GM12878 (cell line): ENCODE measurements at regions of chr17 and their contacts with region 1.

Region 1: DNA sequence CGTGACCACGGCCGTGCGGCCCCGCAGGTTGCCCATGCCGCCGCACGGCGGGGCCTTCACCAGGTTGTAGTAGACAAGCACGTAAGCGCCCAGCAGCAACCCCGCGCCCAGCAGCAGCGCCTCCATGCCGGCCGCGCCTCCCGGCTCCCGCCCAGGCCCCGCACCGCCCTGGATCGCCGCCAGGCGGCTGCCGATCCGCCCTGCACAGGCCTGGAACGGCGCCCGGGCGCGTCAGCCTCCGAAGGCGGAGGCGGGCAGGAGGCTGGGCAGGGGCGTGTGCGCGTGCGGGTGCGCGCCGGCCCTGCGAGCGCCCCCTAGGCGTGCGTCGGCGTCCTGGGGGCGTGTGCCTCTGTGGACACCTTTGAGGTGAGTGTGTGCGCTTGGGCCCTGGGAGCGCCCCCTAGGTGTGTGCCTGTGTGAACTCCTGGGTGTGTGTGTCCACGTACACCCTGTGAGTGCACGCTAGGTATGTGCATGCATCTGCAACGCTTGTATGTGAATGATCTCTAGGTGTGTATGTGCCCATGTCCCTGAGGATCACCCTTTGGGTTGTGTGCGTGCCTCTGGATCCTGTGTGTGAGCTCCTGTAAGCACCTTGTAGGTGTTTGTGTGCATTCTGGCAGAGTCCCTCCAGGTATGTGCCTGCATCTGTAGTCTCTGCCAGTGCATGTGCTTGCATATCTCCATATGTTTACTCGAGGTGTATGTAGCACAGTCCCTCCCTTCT is at the start of gene DHRS13:
- DNase-seq: peak; percentile 81
- ATAC-seq: peak; percentile 91
- H3K4me3 ChIP-seq: peak within 1 kb of the TSS; percentile 82
- H3K27ac ChIP-seq: no peak within 1 kb of the TSS; the same call in 1 of the 2 replicates
- H3K4me1 ChIP-seq: peaks cover 16% of the 10 kb centered on the region
- H3K27me3 ChIP-seq: no peaks in the 10 kb centered on the region
- CTCF ChIP-seq: peak; percentile 89 to 100 (median 97)
- EP300 ChIP-seq: peak in 1 of 2 experiments; percentile 51; a peak in 1 of 4 replicates
- POLR2A ChIP-seq: peak; percentile 70
- RAD21 ChIP-seq: peak; percentile 54
- polyA plus RNA-seq, gene DHRS13: 0.18 TPM in 1 of 2 experiments, not detected in the other

Region 2: DNA sequence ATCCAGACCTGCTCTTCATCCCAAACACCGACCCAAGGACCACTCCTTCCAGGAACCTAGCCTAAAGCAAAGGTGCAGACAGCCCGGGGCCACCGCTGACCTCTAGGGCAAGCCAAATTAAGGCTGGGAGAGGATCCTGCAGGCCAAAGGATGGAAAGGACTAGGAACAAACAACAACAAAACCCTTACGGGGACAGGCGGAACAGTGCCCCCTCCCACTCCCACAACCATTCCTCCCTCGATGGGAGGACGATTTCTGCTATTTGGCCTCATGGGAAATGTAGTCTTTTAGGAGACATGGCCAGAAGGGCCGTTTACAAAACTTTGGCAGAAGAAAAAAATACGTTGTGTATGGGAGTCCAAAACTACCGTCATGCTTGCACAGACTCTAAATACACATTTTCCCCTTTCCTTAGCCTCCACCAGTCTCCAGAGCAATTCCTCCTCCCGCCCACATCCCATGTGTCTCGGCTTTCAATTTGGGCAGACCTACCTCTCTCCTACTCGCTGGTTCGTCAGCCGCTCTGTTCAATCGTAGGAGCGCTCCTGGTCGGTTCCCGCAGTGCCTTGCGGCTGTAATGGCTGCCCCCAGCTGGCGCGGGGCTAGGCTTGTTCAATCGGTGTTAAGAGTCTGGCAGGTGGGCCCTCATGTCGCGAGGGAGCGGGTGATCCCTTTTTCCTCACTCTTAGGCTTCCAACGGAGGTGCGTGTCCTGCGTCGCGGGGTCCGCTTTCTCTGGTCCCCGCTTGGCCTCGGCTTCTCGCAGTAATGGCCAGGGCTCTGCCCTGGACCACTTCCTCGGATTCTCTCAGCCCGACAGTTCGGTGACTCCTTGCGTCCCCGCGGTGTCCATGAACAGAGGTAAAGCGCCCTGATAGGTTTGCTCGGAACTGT is 48.3 kb before region 1 on chr17 and contains the start of gene ERAL1:
- CTCF ChIA-PET with region 1: interaction called, 57 read pairs
- POLR2A ChIA-PET with region 1: interaction called, 9 read pairs
- RAD21 ChIA-PET with region 1: interaction called, 16 read pairs
- SMC1A ChIA-PET with region 1: interaction called, 9 read pairs
- in situ Hi-C with region 1: no loop called
- intact Hi-C with region 1: no loop called
- DNase-seq: peak; percentile 73
- ATAC-seq: peak; percentile 100
- H3K4me3 ChIP-seq: peak within 1 kb of the TSS; percentile 78
- H3K27ac ChIP-seq: peak within 1 kb of the TSS; percentile 86
- H3K4me1 ChIP-seq: peaks cover 14% of the 10 kb centered on the region
- H3K27me3 ChIP-seq: no peaks in the 10 kb centered on the region
- CTCF ChIP-seq: no peak
- EP300 ChIP-seq: no peak
- POLR2A ChIP-seq: peak; percentile 95
- RAD21 ChIP-seq: no peak
- polyA plus RNA-seq, gene ERAL1: 165 to 175 TPM

Region 3: DNA sequence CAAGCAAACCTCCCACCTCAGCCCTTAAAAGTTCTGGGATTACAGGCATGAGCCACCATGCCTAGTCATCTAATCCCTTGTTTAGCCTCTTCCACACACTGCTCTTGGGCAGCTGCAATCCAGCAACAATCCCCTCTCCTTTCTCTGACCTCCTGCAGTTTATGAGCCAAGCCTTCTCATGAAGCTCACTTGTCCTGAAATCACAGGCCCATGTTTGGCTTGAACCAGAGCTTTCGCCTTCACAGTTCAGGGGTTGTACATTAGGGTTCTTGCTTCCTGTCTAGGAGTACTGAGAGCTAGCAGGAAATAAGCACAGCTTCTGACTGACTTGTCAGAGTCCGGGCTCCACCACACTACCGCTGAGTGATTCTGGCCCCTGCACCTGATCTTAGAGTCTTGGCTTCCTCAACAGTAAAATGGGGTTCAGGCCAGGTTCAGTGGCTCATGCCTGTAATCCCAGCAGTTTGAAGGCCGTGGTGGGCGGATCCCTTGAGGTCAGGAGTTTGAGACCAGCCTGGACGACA is 31.9 kb before region 1 on chr17:
- CTCF ChIA-PET with region 1: interaction called, 11 read pairs
- POLR2A ChIA-PET with region 1: interaction called, 7 read pairs
- RAD21 ChIA-PET with region 1: interaction called, 9 read pairs
- SMC1A ChIA-PET with region 1: interaction called, 5 read pairs
- in situ Hi-C with region 1: no loop called
- intact Hi-C with region 1: no loop called
- DNase-seq: peak; percentile 79
- ATAC-seq: peak; percentile 99
- H3K4me3 ChIP-seq: no peak overlapping the region
- H3K27ac ChIP-seq: peak overlapping the region; percentile 61
- H3K4me1 ChIP-seq: peaks cover 15% of the 10 kb centered on the region
- H3K27me3 ChIP-seq: no peaks in the 10 kb centered on the region
- CTCF ChIP-seq: no peak
- EP300 ChIP-seq: no peak
- POLR2A ChIP-seq: peak; percentile 61
- RAD21 ChIP-seq: peak; percentile 25; the same call in 1 of the 2 replicates

Region 4: DNA sequence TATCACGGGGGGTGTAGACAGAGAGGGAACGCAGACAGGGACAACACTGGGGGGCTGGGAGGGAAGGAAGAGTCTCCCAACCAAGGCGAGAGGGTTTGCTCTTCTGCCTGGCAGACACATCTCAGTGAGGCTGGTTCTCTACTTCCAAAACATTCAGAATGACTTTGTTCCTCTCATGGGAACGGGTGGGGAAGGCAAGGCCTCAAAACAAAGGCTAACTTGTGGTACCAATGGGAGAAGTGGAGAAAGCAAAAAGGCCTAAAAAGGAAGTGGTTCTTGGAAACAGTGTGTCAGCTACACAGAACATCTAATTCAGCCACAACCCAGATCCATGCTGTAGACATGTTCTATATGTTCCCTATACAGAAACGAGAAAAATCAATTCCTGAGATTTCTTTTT is 13.0 kb before region 1 on chr17:
- CTCF ChIA-PET with region 1: interaction called, 26 read pairs
- POLR2A ChIA-PET with region 1: interaction called, 9 read pairs
- RAD21 ChIA-PET with region 1: interaction called, 11 read pairs
- SMC1A ChIA-PET with region 1: interaction called, 14 read pairs
- in situ Hi-C with region 1: no loop called
- intact Hi-C with region 1: no loop called
- DNase-seq: no peak
- ATAC-seq: no peak
- H3K4me3 ChIP-seq: no peak overlapping the region
- H3K27ac ChIP-seq: no peak overlapping the region
- H3K4me1 ChIP-seq: peaks cover 59% of the 10 kb centered on the region
- H3K27me3 ChIP-seq: no peaks in the 10 kb centered on the region
- CTCF ChIP-seq: no peak
- EP300 ChIP-seq: no peak
- POLR2A ChIP-seq: no peak
- RAD21 ChIP-seq: no peak